Heart right ventricle (tissue), 16 donors: ENCODE measurements at regions of chr11 and their contacts with region 1.

Region 1: DNA sequence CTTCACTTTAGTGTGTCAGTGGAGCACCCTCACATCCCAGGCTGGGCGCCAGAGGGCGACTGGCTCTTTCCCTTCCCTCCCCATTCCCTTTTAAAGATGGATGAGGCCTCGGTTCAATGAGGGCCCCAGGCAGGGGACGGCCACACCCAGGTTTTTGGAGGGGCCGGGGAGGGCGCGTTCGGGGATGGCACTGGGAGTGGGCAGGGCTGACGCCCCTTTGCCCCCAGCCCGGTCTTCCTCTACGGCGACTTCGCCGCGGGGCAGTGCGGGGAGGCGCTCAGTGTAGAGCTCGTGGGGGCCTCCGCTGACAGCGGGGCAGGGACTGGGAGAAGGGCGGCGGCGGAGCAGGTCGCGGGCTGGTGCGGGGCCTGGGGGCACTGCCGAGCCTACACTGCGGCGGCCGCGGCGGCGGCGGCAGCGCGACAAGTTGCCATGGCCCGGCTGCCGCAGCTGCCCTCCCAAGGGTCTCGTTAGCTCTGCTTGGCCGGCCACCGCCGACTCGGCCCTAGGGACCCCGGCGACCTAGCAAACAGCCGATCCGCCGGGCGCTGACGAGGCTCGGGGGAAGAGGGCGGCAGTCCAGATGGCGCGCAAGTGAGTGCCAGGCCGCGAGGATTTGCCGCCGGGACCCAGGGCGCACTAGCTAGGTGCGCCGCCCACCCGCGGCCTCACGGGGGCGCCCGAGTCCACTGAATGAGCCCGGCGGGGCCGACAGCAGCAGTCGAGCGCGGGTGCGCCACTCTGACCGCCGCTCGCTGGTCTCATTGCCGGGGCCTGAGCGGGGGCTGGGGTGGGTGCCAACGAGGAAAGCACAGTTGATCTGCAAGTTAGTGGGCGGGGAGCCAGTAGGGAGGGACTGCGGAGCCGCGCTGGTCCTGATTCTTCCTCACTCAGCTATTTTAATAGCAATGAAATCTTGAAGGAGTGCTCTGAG is 92.7 kb downstream of the RRM1 start:
- DNase-seq: peak; percentile 89 to 93
- ATAC-seq: peak; percentile 83 to 94 (median 89)
- H3K4me3 ChIP-seq: peak overlapping the region; percentile 36 to 70 (median 64)
- H3K27ac ChIP-seq: peak overlapping the region in 8 of 10 donors; percentile 7 to 66 (median 38)
- H3K4me1 ChIP-seq: peaks cover 0 to 20% (median 5%) of the 10 kb centered on the region in 9 donors
- H3K27me3 ChIP-seq: no peaks in the 10 kb centered on the region
- CTCF ChIP-seq: peak; percentile 94 to 98 (median 96)

Region 2: DNA sequence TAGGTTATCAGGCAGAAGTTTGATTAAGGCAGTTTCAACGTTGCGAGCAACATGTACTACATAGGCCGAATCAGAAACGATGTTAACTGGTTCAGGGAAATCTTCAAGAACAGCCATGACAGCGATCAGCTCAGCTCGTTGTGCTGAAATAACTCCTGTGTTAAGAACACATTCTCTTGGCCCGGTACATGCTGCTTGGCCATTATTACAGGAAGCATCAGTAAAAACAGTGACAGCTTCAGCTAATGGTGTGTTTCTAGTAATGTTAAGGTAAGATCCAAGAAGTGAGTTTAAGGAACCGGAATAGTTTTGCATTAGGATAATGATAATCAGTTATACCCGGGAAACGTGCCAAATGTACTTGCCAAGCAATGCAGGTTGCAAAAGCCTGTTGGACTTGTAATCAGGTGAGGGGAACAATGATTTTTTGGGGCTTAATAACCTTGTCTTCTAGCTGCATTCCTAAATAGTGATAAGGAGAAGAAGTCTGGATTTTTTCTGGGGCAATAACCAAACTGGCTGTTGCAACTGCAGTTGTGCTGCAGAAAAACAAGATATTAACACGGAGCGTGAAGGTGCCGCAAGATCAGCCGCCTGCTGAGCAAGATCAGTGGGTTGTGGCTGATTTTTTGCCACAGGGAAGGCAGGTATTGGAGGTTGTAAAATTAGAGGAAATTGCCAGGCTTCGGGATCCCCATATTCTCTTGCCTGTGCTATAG is 309.4 kb after region 1 on chr11:
- intact Hi-C with region 1: loop called (anchors 1 to 5 kb)
- DNase-seq: no peak
- ATAC-seq: peak in 1 of 8 donors; percentile 68
- H3K4me3 ChIP-seq: no peak overlapping the region
- H3K27ac ChIP-seq: no peak overlapping the region
- H3K4me1 ChIP-seq: peaks cover 0 to 18% (median 4%) of the 10 kb centered on the region in 9 donors
- H3K27me3 ChIP-seq: peaks cover 0 to 18% (median 5%) of the 10 kb centered on the region in 7 donors
- CTCF ChIP-seq: no peak

Region 3: DNA sequence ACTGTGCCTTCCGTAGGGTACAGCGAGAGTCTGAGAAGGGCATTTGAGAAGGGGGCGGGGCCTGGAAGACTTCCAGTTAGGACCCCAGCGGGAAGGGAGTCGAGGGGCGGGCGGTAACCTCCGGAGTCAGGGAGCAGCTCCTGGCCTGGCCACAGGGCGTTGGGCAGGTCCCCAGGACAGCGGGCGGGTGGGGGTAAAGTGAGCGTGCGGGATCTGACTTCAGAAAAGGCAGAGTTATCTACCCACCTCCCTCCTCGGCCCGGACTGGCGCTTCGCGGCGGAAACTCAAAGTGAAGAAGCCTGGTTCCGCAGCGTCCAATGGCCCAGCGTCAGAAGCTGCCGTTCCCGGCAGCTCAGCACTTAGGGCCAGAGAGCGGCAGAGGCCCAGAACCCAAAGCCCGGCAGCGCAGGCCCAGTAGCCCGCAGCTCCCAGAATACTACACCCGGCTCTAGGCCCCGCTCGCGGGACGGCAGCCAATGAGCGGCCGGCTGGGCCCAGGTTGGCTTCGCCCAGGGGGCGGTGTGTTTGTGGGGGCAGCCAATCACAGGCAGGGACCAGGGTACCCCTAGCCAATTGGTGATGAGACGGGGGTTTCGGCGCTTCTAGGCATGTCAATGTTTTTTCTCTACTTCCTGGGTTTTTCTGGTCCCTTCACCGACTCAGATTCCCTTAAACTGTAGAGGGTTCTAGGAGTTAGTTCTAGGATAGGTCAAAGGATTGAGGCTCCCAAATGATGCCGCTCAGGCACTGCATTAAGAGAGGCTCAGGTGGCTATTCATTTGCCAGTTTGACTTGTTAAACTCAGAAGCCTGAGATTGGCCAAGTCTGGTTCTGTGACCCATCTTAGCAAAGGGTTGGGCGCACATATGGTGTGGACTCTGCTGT is 420.7 kb after region 1 on chr11 and contains the start of gene TRIM68:
- intact Hi-C with region 1: loop called in 1 of 10 experiments (anchors 10 kb)
- DNase-seq: peak; percentile 97 to 98
- ATAC-seq: peak; percentile 99 to 100 (median 100)
- H3K4me3 ChIP-seq: peak within 1 kb of the TSS; percentile 53 to 86 (median 74)
- H3K27ac ChIP-seq: peak within 1 kb of the TSS; percentile 51 to 96 (median 92)
- H3K4me1 ChIP-seq: peaks cover 0 to 32% (median 23%) of the 10 kb centered on the region in 9 donors
- H3K27me3 ChIP-seq: no peaks in the 10 kb centered on the region
- CTCF ChIP-seq: peak in 1 of 9 donors; percentile 16
- total RNA-seq, gene TRIM68: 6.4 to 12.8 (median 10.5) TPM

Region 4: DNA sequence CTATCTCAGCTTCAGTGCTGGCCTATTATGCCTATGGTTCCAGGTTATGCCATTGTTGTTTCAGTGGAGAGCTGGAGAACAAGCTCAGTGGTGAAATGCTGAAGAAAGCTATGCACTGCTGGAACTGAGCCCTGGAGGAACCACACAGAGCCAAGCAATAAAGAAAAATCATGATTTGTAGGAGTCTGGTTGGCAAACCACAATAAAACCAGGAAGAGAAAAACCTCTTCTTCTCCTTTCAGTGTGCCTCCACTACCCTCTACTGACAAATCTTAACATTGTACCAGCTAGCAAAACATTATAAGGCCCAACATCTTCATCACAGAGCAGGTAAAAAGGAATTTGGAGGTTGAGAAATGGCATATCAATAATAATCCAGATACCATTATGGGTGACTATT is 639.1 kb after region 1 on chr11:
- intact Hi-C with region 1: loop called in 1 of 10 experiments (anchors 5 kb)
- DNase-seq: no peak
- ATAC-seq: peak in 4 of 8 donors; percentile 34 to 70 (median 56)
- H3K4me3 ChIP-seq: no peak overlapping the region
- H3K27ac ChIP-seq: no peak overlapping the region
- H3K4me1 ChIP-seq: no peaks in the 10 kb centered on the region
- H3K27me3 ChIP-seq: no peaks in the 10 kb centered on the region
- CTCF ChIP-seq: peak; percentile 31 to 69 (median 57)